Activated CD4-positive, alpha-beta T cell treated with anti-CD3 and anti-CD28 coated beads for 36 hours (primary cell): ENCODE measurements at regions of chrX and their contacts with region 1.

Region 1: DNA sequence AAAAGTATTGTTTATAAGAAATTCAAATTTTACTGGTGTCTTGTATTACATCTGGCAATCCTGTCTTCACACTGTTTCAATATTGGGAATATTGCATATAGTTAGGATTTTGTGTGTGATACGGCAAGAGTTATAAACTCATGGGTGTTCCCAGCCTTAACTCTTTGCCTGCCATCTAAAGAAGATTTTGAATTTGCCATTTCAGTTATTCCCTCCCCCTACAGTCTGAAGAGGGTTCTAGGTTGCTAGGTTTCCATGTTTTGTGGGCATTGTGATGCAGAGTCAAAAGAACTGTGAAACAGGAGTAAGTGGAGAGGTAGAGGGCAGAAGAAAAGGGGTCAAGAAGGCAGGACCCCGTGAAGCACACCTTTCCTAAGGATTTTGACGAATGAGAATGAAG is at the start of gene CPXCR1:
- DNase-seq: no peak
- ATAC-seq: no peak
- H3K4me3 Mint-ChIP-seq: no peak within 1 kb of the TSS
- H3K27ac Mint-ChIP-seq: no peak within 1 kb of the TSS
- H3K4me1 Mint-ChIP-seq: no peaks in the 10 kb centered on the region
- H3K27me3 Mint-ChIP-seq: no peaks in the 10 kb centered on the region
- total RNA-seq, gene CPXCR1: not detected

Region 2: GRCh38 chrX:88735835-88736234 is 11.1 kb before region 1 on chrX:
- CTCF ChIA-PET with region 1: no interaction called
- POLR2A ChIA-PET with region 1: no interaction called
- intact Hi-C with region 1: loop called in 1 of 2 experiments (anchors 1 kb)
- DNase-seq: no peak
- ATAC-seq: no peak
- H3K4me3 Mint-ChIP-seq: no peak overlapping the region
- H3K27ac Mint-ChIP-seq: no peak overlapping the region
- H3K4me1 Mint-ChIP-seq: no peaks in the 10 kb centered on the region
- H3K27me3 Mint-ChIP-seq: no peaks in the 10 kb centered on the region